Transverse colon (tissue), 4 donors: ENCODE measurements at regions of chr21 and their contacts with region 1.

Region 1: DNA sequence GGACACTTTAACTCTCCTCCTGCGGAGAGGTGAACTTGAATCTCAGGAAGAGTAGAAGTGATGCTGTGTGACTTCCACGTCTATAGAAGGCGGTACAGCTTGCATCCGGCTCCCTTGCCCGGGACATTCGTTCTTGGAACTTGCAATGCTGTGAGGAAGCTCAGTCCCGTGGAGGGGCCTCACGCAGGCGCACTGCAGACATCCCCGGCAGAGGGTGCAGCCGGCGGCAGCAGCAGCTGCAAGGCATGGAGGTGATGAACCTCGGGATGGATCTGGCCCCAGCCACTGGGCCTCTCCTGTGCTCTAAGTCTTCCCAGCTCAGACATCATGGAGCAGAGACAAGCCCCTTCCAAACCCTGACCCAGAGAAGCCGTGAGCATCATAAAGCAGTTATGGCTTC is 61.8 kb upstream of the SOD1 start:
- DNase-seq: no peak
- H3K4me3 ChIP-seq: no peak overlapping the region
- H3K27ac ChIP-seq: no peak overlapping the region
- H3K4me1 ChIP-seq: no peaks in the 10 kb centered on the region
- H3K27me3 ChIP-seq: no peaks in the 10 kb centered on the region
- CTCF ChIP-seq: no peak
- EP300 ChIP-seq: no peak
- POLR2A ChIP-seq: no peak

Region 2: DNA sequence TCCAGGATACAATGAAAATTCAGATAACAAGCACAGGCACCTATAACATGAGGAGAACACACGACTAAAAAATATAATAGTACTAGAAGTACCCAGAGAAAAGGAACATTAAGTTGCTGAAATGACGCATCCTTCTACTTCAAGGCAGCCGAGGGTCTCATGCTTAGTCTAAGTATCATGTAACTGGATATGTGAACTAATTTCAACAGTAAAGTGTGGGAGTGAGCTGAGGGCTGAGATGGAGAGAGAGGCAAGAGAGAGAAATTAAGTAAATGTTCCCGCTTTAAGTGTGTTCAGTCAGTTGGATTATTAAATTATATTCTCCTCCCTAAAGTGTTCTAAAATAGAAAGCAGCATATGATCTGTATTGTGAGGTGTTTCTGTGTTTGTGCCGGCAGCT is 407.2 kb before region 1 on chr21:
- in situ Hi-C with region 1: loop called in 2 of 4 experiments (anchors 5 to 10 kb)
- intact Hi-C with region 1: loop called (anchors 5 kb)
- DNase-seq: no peak
- H3K4me3 ChIP-seq: no peak overlapping the region
- H3K27ac ChIP-seq: no peak overlapping the region
- H3K4me1 ChIP-seq: no peaks in the 10 kb centered on the region
- H3K27me3 ChIP-seq: no peaks in the 10 kb centered on the region
- CTCF ChIP-seq: no peak
- EP300 ChIP-seq: no peak
- POLR2A ChIP-seq: no peak

Region 3: GRCh38 chr21:31895077-31895835 is 297.6 kb after region 1 on chr21:
- in situ Hi-C with region 1: no loop called
- intact Hi-C with region 1: no loop called
- DNase-seq: no peak
- H3K4me3 ChIP-seq: no peak overlapping the region
- H3K27ac ChIP-seq: peak overlapping the region in 3 of 4 donors; percentile 0 to 8 (median 4)
- H3K4me1 ChIP-seq: peaks cover 0 to 21% (median 20%) of the 10 kb centered on the region in 4 donors
- H3K27me3 ChIP-seq: no peaks in the 10 kb centered on the region
- CTCF ChIP-seq: no peak
- EP300 ChIP-seq: no peak
- POLR2A ChIP-seq: no peak

Region 4: GRCh38 chr21:32312326-32312725 is 714.6 kb after region 1 on chr21:
- in situ Hi-C with region 1: no loop called
- intact Hi-C with region 1: no loop called
- DNase-seq: no peak
- H3K4me3 ChIP-seq: no peak overlapping the region
- H3K27ac ChIP-seq: no peak overlapping the region
- H3K4me1 ChIP-seq: no peaks in the 10 kb centered on the region
- H3K27me3 ChIP-seq: no peaks in the 10 kb centered on the region
- CTCF ChIP-seq: no peak
- EP300 ChIP-seq: no peak
- POLR2A ChIP-seq: no peak